AG04450 (cell line): ENCODE measurements at regions of chr12 and their contacts with region 1.

Region 1: DNA sequence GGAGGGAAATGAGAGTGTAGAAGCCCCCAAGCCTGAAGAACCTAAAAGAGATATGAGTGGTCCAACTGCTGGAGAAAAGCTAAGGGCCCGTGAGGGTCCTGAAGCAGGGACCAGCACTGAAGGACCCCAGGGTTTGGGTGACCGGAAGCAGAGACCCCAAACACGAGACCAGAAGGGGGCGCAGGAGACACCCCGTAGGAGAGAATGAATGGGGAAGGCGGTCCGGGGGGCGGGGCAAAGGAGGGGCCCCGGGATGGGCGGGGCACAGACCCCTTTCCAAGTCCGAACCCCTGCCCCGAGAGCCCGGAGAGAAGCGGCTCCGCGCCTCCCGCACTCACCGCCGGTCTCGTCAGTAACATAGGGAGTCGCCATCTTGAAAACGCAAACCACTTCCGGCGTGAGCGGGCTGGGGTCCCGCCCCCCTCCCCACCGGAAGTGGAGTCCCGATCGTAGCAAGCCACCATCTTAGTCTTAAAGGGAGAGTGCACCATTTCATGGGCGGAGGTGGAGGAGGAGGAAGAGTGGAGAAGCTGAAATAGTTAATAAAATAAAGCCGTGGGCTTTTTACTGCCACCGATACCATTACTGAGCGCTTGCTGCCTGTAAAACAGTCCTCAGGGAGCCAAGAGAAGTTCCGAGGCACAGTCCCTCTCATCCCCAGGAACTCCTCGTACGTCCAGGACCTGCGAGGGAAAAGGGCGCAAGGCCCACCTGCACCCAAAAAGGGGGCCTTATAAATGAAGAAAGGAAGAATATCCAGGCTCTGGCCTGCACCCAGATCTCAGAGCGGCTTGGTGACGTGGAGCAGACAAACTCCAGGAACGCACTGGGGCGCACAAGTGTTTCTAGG is 731 bp downstream of the PYM1 start:
- DNase-seq: peak; percentile 74
- H3K4me3 ChIP-seq: peak overlapping the region; percentile 97
- H3K27ac ChIP-seq: peak overlapping the region; percentile 93
- H3K27me3 ChIP-seq: no peaks in the 10 kb centered on the region
- CTCF ChIP-seq: peak; percentile 86

Region 2: GRCh38 chr12:55829967-55830600 is 96.9 kb before region 1 on chr12:
- CTCF ChIA-PET with region 1: interaction called, 18 read pairs
- POLR2A ChIA-PET with region 1: interaction called, 22 read pairs
- DNase-seq: no peak
- H3K4me3 ChIP-seq: peak overlapping the region; percentile 91
- H3K27ac ChIP-seq: peak overlapping the region; percentile 81
- H3K27me3 ChIP-seq: no peaks in the 10 kb centered on the region
- CTCF ChIP-seq: no peak

Region 3: GRCh38 chr12:55908726-55909512 is 18.0 kb before region 1 on chr12:
- CTCF ChIA-PET with region 1: interaction called, 23 read pairs
- POLR2A ChIA-PET with region 1: interaction called, 12 read pairs
- DNase-seq: no peak
- H3K4me3 ChIP-seq: no peak overlapping the region
- H3K27ac ChIP-seq: peak overlapping the region; percentile 31
- H3K27me3 ChIP-seq: no peaks in the 10 kb centered on the region
- CTCF ChIP-seq: no peak

Region 4: DNA sequence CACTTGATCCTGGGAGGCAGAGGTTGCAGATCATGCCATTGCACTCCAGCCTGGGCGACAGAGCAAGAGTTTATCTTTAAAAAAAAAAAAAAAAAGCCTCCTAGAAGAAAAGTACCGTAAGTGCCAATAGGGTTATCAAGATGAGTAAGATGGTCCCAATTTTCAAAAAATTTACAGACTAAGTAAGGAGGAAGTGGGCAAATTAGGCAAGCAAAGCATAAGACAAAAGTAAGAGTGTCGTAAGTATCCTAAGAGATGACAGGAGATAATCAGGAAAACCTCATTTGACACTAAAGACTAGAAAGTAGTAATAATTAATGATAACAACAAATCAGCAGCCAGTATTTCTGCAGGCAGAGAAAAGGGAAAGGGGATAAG is 11.5 kb before region 1 on chr12:
- CTCF ChIA-PET with region 1: interaction called, 23 read pairs
- POLR2A ChIA-PET with region 1: interaction called, 12 read pairs
- DNase-seq: no peak
- H3K4me3 ChIP-seq: no peak overlapping the region
- H3K27ac ChIP-seq: no peak overlapping the region
- H3K27me3 ChIP-seq: no peaks in the 10 kb centered on the region
- CTCF ChIP-seq: no peak